Ovary (tissue), 10 donors: ENCODE measurements at regions of chr2 and their contacts with region 1.

Region 1: DNA sequence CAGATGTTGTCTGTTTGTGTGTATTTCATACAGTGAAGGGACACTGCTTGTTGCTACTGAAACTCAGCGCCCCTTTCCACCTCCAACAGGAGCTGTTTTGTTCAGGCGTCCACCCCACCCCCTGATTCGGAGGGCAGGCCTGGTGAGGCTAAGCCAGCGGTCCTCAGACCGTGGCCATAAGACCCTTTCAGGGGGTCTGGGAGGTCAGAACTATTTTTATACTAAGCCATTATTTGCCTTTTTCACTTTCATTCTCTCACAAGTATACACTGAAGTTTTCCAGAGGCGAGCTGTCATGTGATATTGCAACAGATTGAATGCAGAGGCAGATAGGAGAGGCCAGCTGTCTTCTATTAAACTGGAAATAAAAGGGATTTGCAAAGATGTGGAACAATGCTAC is 39.7 kb upstream of the IGFBP5 start:
- DNase-seq: peak; percentile 36 to 61 (median 49)
- H3K4me3 ChIP-seq: no peak overlapping the region
- H3K27ac ChIP-seq: peak overlapping the region; percentile 36 to 73
- H3K4me1 ChIP-seq: peaks cover 24% of the 10 kb centered on the region
- H3K27me3 ChIP-seq: no peaks in the 10 kb centered on the region
- CTCF ChIP-seq: no peak
- EP300 ChIP-seq: no peak
- POLR2A ChIP-seq: no peak

Region 2: GRCh38 chr2:216789081-216789480 is 54.0 kb after region 1 on chr2:
- intact Hi-C with region 1: loop called in 1 of 4 experiments (anchors 10 kb)
- DNase-seq: no peak
- H3K4me3 ChIP-seq: no peak overlapping the region
- H3K27ac ChIP-seq: no peak overlapping the region
- H3K4me1 ChIP-seq: peaks cover 15% of the 10 kb centered on the region
- H3K27me3 ChIP-seq: no peaks in the 10 kb centered on the region
- CTCF ChIP-seq: no peak
- EP300 ChIP-seq: no peak
- POLR2A ChIP-seq: no peak

Region 3: DNA sequence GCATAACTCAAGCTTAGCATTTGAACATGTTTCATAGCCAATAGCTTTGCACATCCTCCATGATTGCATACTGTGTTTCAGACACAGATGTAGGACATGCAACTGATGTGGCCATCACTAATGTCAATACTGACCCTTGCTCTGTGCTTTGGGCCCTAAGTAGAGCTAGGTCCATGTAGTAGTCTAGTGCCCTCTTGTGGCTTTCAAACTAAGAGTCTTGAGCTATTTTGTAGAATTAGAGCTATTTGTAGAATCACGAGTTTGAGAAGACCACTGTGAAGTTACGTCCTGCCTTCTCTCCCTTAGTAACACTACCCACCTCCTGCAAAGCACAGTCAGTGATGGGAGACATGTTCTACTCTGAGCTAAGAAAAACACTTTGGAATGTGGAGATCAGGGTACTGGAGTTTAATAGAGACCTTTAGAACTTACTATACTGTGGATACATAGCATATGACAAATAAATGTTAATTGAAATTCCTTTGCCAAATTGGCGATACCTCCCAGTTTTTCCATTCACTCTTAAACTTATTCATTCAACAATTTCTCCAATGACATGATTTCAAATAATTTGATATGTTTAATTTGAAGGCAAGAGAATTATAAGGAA is 431.3 kb after region 1 on chr2:
- intact Hi-C with region 1: no loop called
- DNase-seq: no peak
- H3K4me3 ChIP-seq: no peak overlapping the region
- H3K27ac ChIP-seq: no peak overlapping the region
- H3K4me1 ChIP-seq: peaks cover 5% of the 10 kb centered on the region
- H3K27me3 ChIP-seq: no peaks in the 10 kb centered on the region
- CTCF ChIP-seq: peak in 1 of 3 donors; percentile 43
- EP300 ChIP-seq: no peak
- POLR2A ChIP-seq: no peak